Common myeloid progenitor, CD34-positive (primary cell): ENCODE measurements at regions of chr10 and their contacts with region 1.

Region 1: GRCh38 chr10:89363729-89364442 is 14.0 kb upstream of the IFIT1B start:
- DNase-seq: peak in 2 of 3 donors; percentile 31 to 61
- H3K4me3 ChIP-seq: no peak overlapping the region
- H3K27ac ChIP-seq: no peak overlapping the region
- H3K4me1 ChIP-seq: peaks cover 5 to 25% (median 18%) of the 10 kb centered on the region in 4 experiments
- H3K27me3 ChIP-seq: no peaks in the 10 kb centered on the region

Region 2: GRCh38 chr10:88880282-88881076 is 483.4 kb before region 1 on chr10:
- CTCF ChIA-PET with region 1: no interaction called
- POLR2A ChIA-PET with region 1: no interaction called
- DNase-seq: peak; percentile 77 to 88 (median 80)
- H3K4me3 ChIP-seq: peak overlapping the region; percentile 87 to 98 (median 95)
- H3K27ac ChIP-seq: peak overlapping the region; percentile 41 to 81
- H3K4me1 ChIP-seq: peaks cover 26 to 42% (median 32%) of the 10 kb centered on the region in 4 experiments
- H3K27me3 ChIP-seq: no peaks in the 10 kb centered on the region

Region 3: GRCh38 chr10:89047397-89047796 is 316.5 kb before region 1 on chr10:
- CTCF ChIA-PET with region 1: no interaction called
- POLR2A ChIA-PET with region 1: no interaction called
- DNase-seq: no peak
- H3K4me3 ChIP-seq: no peak overlapping the region
- H3K27ac ChIP-seq: no peak overlapping the region
- H3K4me1 ChIP-seq: peaks cover 0 to 16% (median 4%) of the 10 kb centered on the region in 4 experiments
- H3K27me3 ChIP-seq: no peaks in the 10 kb centered on the region

Region 4: DNA sequence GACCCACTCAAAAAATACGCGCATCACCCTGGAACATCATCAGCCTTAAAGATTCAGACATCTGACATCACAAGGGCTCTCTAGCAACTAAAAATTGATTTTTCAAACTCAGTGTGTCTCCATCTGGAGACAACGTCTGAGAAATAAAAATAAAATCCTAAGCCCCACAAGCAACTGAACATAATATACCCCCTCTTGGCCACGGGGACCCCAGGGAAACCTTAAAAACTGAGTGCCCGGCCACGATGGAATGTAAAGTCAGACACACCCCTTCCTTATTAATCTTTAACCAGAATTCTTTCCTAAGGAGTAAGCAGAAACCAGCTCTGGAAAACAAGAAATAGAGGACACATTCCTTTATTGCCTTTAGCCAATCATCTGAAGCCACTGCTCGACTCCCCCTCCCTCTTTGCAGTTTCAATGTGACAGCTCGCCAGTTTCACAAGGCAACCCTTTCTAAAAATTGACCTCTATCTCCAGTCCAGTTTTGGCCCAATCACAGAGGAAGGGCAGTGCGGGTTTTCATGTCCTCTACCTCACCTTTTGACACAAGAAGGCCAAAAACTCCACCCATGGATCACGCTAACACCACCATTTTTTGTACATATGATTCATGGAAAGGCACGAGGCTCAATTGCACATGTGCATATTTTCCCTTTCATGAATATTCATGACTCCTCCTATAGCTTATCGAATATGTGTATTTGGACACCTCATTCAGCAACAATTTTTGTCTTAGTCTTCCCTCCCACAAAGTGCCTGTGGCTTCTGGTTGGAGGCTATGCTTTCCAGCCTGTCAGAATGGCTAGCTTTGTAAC is 11.9 kb before region 1 on chr10:
- CTCF ChIA-PET with region 1: interaction called, 24 read pairs
- POLR2A ChIA-PET with region 1: no interaction called
- DNase-seq: no peak
- H3K4me3 ChIP-seq: no peak overlapping the region
- H3K27ac ChIP-seq: no peak overlapping the region
- H3K4me1 ChIP-seq: peaks cover 2 to 30% (median 20%) of the 10 kb centered on the region in 4 experiments
- H3K27me3 ChIP-seq: no peaks in the 10 kb centered on the region

Region 5: DNA sequence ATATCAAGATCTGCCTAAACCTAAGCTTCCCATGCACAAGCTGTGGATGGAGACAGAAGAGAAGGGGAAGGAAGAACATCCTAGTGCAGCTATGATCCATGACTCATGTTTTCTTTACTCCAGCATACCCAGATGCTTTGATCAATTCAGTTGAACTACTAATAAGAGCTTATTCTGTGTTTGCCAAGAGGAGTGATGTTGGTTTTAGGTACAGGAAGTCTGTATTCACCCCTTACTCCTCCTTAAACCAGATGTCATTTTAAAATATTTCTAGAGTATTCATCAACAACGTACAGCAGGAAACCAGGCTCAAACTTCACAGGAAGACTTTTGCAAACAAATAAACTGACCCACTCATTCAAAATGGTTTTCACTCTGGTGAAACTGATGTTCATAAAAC is 251.9 kb after region 1 on chr10:
- CTCF ChIA-PET with region 1: no interaction called
- POLR2A ChIA-PET with region 1: no interaction called
- DNase-seq: peak; percentile 19 to 78 (median 42)
- H3K4me3 ChIP-seq: peak overlapping the region in 1 of 7 experiments; percentile 33
- H3K27ac ChIP-seq: no peak overlapping the region
- H3K4me1 ChIP-seq: peaks cover 0 to 24% (median 6%) of the 10 kb centered on the region in 4 experiments
- H3K27me3 ChIP-seq: no peaks in the 10 kb centered on the region